ENCODE measurements at regions of chr4 and their contacts with region 1.

Region 1: GRCh38 chr4:16225863-16226815 is at the start of gene TAPT1:
- DNase-seq: peak; percentile 81
- H3K4me3 ChIP-seq: peak within 1 kb of the TSS; percentile 71
- H3K27ac ChIP-seq: peak within 1 kb of the TSS; percentile 77
- H3K4me1 ChIP-seq: peaks cover 63% of the 10 kb centered on the region
- CTCF ChIP-seq: no peak
- total RNA-seq, gene TAPT1: 23.2 and 34.3 TPM in 2 replicates

Region 2: DNA sequence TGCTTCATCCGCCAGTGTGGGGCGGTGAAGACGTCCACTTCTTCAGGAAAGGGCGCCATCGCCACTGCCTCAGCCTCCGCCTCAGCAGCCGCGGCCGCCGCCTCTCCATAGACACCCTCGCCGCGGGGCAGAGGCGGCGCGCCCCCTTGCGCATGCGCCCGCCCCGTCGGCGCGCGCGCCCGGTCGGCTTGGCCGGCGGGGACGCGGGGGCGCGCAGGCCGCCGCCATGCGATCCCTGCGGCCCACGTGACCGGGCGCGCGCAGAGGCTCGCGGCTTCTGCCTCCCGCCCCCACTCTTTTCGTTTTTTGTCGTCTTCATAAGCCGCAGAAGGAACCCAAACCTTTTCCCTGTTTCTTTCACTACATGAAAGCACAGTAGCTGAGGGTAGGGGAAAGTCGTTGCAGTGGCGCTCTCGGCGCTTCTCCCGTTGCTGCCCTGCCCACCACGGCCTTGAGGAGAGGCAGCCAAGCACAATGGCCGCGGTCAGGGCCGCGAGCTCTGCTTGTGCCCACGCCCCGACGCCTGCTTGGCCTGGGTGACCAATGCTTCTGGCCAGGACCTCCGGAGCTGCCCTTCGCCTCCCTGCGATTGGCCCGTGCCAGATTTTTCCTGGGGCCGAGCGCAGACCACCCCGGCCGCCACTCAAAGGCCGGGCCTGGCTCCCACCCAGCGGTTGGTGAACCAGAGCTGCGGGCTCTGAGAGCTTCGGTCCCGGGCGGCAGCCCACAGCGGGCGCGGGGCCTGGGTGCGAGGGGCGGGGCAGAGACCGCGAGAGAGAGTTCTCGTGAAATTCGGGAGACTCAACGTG is 570.7 kb before region 1 on chr4 and contains the start of gene FBXL5:
- CTCF ChIA-PET with region 1: no interaction called
- POLR2A ChIA-PET with region 1: no interaction called
- intact Hi-C with region 1: loop called (anchors 10 kb)
- DNase-seq: peak; percentile 92
- H3K4me3 ChIP-seq: peak within 1 kb of the TSS; percentile 92
- H3K27ac ChIP-seq: peak within 1 kb of the TSS; percentile 68
- H3K4me1 ChIP-seq: peaks cover 48% of the 10 kb centered on the region
- CTCF ChIP-seq: no peak
- total RNA-seq, gene FBXL5: 73.9 and 102 TPM in 2 replicates

Region 3: DNA sequence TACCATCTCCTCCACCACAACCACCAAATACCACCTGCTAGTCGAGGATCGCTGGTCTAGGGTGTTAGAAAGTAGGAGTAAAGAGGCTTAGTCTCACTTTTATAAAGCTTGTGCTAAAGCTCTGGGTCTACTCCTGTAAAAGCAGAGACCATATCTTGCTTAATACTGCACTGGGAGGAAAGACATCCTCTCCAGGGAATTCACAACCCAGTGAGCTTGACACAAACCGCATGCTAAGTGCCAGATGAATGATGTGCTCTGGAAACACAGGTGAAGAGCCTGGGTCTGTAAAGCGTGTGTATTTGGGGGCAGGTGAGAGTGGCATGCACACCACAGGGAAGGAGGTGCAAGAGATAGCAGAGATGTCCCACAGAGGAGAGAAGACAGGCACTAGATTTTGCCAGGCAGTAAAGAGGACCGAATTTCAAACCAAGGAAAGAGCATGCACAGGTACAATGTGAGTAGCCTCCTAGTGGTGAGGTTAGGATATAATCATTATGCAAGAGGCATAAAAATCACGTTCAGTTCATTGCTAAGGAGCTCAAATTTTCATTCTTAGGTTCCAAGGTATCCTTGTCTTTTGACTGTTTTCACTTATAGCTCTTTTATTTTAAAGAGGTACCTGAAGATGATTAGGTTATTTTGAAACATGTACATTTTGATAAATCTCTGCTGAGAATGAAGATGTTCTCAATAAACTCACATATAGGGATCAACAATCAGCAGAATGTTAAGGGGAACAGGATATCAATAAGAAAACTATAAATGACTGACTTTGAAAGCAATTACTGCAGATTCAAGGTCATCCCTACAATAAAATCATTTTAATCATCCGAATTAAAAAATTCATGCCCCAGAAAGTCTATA is 20.6 kb before region 1 on chr4:
- CTCF ChIA-PET with region 1: interaction called, 3 read pairs
- POLR2A ChIA-PET with region 1: interaction called, 8 read pairs
- intact Hi-C with region 1: loop called (anchors 2 kb)
- DNase-seq: peak; percentile 86
- H3K4me3 ChIP-seq: peak overlapping the region; percentile 18
- H3K27ac ChIP-seq: peak overlapping the region; percentile 39
- H3K4me1 ChIP-seq: peaks cover 21% of the 10 kb centered on the region
- CTCF ChIP-seq: peak; percentile 84

Region 4: DNA sequence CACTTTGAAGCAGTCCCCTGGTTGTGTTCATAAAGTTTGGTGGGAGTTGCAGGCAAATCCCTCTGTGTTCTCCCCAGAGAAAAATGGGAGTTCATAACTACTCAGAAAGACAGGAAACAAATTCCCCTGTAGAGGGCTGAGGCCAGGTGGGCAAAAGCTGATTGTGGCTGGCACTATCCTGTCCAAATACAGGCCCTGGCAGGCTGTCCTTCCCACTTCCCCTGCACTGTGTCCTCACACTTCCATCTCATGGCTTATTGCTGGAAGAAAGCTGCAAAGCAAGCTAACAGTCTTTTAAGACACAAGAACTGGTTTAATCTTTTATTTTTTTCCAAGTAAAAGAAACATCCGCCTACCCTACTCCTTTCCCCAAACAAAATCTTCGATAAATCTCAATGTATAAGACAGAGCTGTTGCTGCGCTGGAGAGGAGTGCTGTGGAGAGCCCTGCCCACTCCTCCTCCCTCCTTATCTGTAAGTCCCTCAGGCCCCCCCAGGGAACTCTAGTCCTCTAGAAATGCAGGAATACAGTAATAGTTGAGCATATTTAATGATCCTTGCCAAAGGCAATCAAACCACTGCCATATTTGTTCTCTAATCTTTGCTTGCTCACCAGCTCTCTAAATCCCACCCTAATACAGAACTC is 13.9 kb before region 1 on chr4:
- CTCF ChIA-PET with region 1: no interaction called
- POLR2A ChIA-PET with region 1: interaction called, 10 read pairs
- intact Hi-C with region 1: loop called (anchors 2 kb)
- DNase-seq: no peak
- H3K4me3 ChIP-seq: no peak overlapping the region
- H3K27ac ChIP-seq: no peak overlapping the region
- H3K4me1 ChIP-seq: peaks cover 16% of the 10 kb centered on the region
- CTCF ChIP-seq: no peak

Region 5: DNA sequence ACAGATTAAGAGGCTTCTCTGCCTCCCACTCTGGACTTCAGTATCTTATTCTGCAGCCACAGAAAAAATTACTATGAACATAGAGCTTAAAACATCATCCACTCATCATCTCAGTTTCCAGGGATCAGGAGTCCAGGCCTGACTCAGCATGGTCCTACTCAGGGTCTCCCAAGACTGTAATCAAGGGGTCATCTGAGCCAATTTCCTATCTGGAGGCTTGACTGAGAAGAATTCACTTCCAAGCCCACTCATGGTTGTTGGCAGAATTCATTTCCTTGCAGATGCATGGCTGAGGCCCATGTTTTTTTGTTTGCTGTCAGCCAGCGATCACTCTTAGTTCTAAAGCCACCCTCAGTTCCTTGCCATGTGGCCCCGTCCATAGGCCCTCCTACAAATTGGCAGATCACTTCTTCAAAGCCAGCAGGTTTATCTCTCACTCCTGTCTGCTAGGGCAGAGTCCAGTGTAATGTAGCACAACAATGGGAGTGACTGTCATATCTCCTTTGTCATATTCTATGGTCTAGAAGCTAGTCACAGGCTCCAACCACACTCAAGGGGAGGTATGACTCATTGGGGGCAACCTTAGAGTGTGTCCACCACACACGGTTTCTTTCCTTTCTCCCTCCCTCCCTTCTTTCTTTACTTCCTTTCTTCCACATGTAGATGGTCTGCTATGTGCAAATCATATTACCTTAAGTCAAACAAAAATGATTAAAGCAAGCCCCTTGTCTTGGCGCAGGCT is 1034.2 kb after region 1 on chr4:
- CTCF ChIA-PET with region 1: no interaction called
- POLR2A ChIA-PET with region 1: no interaction called
- intact Hi-C with region 1: no loop called
- DNase-seq: no peak
- H3K4me3 ChIP-seq: no peak overlapping the region
- H3K27ac ChIP-seq: no peak overlapping the region
- H3K4me1 ChIP-seq: no peaks in the 10 kb centered on the region
- CTCF ChIP-seq: no peak

Region 6: DNA sequence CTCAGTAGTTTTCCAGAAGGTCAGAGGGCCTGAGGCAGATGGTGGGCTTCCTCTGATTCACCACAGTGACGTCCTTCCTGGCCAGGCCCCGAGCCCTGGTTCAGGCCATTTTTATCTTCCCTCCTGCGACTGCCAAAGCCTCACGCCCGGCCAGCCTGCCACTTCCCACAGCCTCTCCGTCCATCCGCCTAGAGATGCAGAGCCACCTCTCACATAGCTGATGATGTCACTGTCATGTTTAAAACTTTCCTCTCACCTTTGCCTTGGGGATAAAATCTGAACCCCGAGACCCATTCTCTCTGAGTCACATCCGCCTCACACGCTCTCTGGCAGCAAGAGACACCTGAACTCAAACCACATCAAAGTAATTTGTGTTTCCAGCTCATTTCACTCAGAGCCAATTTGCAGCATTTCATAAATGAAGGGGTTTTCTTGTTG is 1110.4 kb after region 1 on chr4:
- CTCF ChIA-PET with region 1: no interaction called
- POLR2A ChIA-PET with region 1: no interaction called
- intact Hi-C with region 1: loop called (anchors 10 kb)
- DNase-seq: peak; percentile 95
- H3K4me3 ChIP-seq: peak overlapping the region; percentile 50
- H3K27ac ChIP-seq: peak overlapping the region; percentile 92
- H3K4me1 ChIP-seq: peaks cover 81% of the 10 kb centered on the region
- CTCF ChIP-seq: no peak

Measured in OCI-LY7 (cell line).